ENCODE measurements at regions of chr1 and their contacts with region 1.

Region 1: GRCh38 chr1:184407816-184408537 is 21.1 kb downstream of the C1orf21 start:
- DNase-seq: peak; percentile 34
- H3K4me3 Mint-ChIP-seq: no peak overlapping the region
- H3K27ac Mint-ChIP-seq: peak overlapping the region; percentile 44
- H3K4me1 Mint-ChIP-seq: peaks cover 39% of the 10 kb centered on the region
- H3K27me3 Mint-ChIP-seq: no peaks in the 10 kb centered on the region
- CTCF ChIP-seq: no peak

Region 2: GRCh38 chr1:184366997-184367396 is 41.0 kb before region 1 on chr1:
- CTCF ChIA-PET with region 1: no interaction called
- POLR2A ChIA-PET with region 1: no interaction called
- intact Hi-C with region 1: no loop called
- DNase-seq: no peak
- H3K4me3 Mint-ChIP-seq: no peak overlapping the region
- H3K27ac Mint-ChIP-seq: no peak overlapping the region
- H3K4me1 Mint-ChIP-seq: peaks cover 33% of the 10 kb centered on the region
- H3K27me3 Mint-ChIP-seq: no peaks in the 10 kb centered on the region
- CTCF ChIP-seq: no peak

Region 3: DNA sequence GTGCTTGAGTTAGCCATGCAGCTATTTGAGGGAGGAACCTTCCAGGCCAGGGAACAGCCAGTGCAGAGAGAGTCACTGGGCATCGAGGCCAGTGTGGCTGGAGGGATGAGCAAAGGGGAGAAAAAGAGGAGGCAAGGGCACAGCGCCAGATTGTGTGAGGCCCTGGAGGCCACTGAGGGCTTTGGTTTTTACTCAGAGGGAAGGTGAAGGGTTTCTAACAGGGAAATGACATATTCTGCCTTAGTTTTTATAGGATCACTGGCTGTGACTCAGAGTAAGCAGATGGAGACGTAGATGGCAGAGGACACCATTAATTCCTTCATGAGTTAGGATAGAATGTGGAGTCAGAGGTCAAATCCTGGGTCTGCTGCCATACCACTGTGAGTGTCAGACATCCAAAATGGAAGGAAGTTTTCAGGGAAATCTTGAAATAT is 11.8 kb after region 1 on chr1:
- CTCF ChIA-PET with region 1: interaction called, 3 read pairs
- POLR2A ChIA-PET with region 1: interaction called, 19 read pairs
- intact Hi-C with region 1: no loop called
- DNase-seq: peak; percentile 28
- H3K4me3 Mint-ChIP-seq: no peak overlapping the region
- H3K27ac Mint-ChIP-seq: no peak overlapping the region
- H3K4me1 Mint-ChIP-seq: peaks cover 45% of the 10 kb centered on the region
- H3K27me3 Mint-ChIP-seq: no peaks in the 10 kb centered on the region
- CTCF ChIP-seq: no peak

Region 4: DNA sequence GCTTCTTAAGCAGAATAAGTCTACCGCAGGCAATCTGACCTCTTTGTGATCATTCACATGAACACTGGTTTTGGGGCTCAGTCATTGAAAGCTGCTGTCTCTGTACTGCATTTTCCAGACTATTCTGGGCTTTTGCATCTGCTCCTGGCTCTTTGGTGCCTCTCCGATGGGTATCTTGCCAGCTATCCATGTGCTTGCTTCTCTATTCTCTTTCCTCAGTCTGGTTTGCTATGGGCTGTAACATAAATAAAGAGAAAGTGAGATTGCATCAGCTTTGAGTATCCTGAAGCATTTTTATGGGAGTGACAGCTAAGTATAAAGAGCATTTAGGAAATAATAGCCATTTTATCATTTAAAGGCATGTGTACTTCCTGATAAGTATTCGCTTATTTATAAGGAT is 49.5 kb after region 1 on chr1:
- CTCF ChIA-PET with region 1: no interaction called
- POLR2A ChIA-PET with region 1: no interaction called
- intact Hi-C with region 1: no loop called
- DNase-seq: peak; percentile 6
- H3K4me3 Mint-ChIP-seq: no peak overlapping the region
- H3K27ac Mint-ChIP-seq: no peak overlapping the region
- H3K4me1 Mint-ChIP-seq: peaks cover 25% of the 10 kb centered on the region
- H3K27me3 Mint-ChIP-seq: no peaks in the 10 kb centered on the region
- CTCF ChIP-seq: no peak

Region 5: GRCh38 chr1:184574588-184574987 is 166.6 kb after region 1 on chr1:
- CTCF ChIA-PET with region 1: no interaction called
- POLR2A ChIA-PET with region 1: no interaction called
- intact Hi-C with region 1: no loop called
- DNase-seq: no peak
- H3K4me3 Mint-ChIP-seq: no peak overlapping the region
- H3K27ac Mint-ChIP-seq: no peak overlapping the region
- H3K4me1 Mint-ChIP-seq: no peaks in the 10 kb centered on the region
- H3K27me3 Mint-ChIP-seq: no peaks in the 10 kb centered on the region
- CTCF ChIP-seq: no peak

Region 6: GRCh38 chr1:185367218-185367617 is 959.2 kb after region 1 on chr1:
- CTCF ChIA-PET with region 1: no interaction called
- POLR2A ChIA-PET with region 1: no interaction called
- intact Hi-C with region 1: no loop called
- DNase-seq: no peak
- H3K4me3 Mint-ChIP-seq: no peak overlapping the region
- H3K27ac Mint-ChIP-seq: peak overlapping the region; percentile 70
- H3K4me1 Mint-ChIP-seq: peaks cover 17% of the 10 kb centered on the region
- H3K27me3 Mint-ChIP-seq: no peaks in the 10 kb centered on the region
- CTCF ChIP-seq: no peak

Measured in MCF 10A (cell line).